PC-9 (cell line): ENCODE measurements at regions of chr6 and their contacts with region 1.

Region 1: GRCh38 chr6:79250107-79250514 is 15.6 kb upstream of the HMGN3 start:
- DNase-seq: no peak
- H3K4me3 ChIP-seq: no peak overlapping the region
- H3K27ac ChIP-seq: no peak overlapping the region
- H3K4me1 ChIP-seq: no peaks in the 10 kb centered on the region
- H3K27me3 ChIP-seq: no peaks in the 10 kb centered on the region
- CTCF ChIP-seq: no peak

Region 2: GRCh38 chr6:79215233-79215824 is 34.8 kb before region 1 on chr6:
- CTCF ChIA-PET with region 1: no interaction called
- POLR2A ChIA-PET with region 1: no interaction called
- intact Hi-C with region 1: no loop called
- DNase-seq: no peak
- H3K4me3 ChIP-seq: no peak overlapping the region
- H3K27ac ChIP-seq: no peak overlapping the region
- H3K4me1 ChIP-seq: no peaks in the 10 kb centered on the region
- H3K27me3 ChIP-seq: no peaks in the 10 kb centered on the region
- CTCF ChIP-seq: no peak

Region 3: DNA sequence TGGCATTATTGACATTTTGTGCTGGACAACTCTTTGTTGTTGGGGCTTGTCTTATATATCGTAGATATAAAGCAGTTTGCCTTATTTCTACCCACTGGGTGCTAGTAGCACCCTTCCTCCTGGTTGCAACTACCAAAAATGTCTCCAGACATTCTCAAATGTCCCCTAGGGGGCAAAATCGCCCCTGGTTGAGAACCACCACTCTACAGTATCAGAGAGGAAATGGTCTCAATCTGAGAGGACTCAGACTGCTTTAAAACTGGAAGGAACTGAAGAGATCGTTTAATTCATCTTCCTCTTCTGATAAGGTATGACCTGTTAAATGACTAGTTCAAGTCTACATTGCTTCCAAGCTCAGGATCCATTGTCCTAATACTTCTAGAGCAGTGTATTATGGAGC is 395.9 kb after region 1 on chr6:
- CTCF ChIA-PET with region 1: no interaction called
- POLR2A ChIA-PET with region 1: interaction called, 13 read pairs
- intact Hi-C with region 1: no loop called
- DNase-seq: no peak
- H3K4me3 ChIP-seq: no peak overlapping the region
- H3K27ac ChIP-seq: no peak overlapping the region
- H3K4me1 ChIP-seq: no peaks in the 10 kb centered on the region
- H3K27me3 ChIP-seq: no peaks in the 10 kb centered on the region
- CTCF ChIP-seq: no peak